ENCODE measurements at regions of chr21 and their contacts with region 1.

Region 1: DNA sequence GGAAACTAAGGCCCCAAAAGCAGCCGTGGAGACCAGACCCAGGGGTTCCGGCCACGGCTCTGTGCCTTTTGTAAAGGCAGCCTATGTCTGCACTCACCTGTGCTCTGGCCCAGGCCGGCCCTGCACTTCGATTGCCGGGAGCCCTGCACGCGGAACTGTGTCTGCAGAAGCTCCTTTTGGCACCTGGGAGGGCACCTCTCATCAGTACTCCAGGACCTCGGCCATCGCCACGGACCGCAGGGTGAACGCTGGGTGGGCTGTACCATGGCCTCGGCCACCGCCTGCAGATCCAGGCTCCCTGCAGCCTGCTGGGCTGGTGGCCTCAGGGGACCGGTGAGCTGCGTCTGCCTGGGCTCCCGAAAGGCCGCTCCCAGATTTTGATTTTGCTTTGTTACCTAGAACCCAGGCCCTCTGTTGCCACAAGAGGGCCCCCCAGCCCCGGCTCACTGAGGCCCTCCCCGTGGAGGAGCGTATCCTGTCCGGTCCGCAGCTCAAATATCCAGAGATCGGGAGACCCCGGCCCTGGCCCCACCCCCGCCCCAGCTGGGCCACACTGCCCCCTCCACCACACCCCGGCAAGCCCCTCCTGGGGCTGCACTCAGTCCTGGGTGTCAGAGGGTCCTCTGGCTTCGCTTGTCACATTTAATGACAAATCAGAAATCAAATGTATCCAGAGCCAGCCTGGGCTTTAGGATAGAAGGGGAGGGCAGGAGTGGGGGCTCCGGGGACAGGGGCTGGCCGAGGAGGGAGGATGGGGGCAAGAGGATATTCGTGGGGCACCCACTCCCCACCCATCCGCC is 60.2 kb upstream of the PDE9A start:
- DNase-seq: peak; percentile 58
- H3K4me3 ChIP-seq: peak overlapping the region; percentile 24
- H3K27ac ChIP-seq: no peak overlapping the region
- H3K4me1 ChIP-seq: peaks cover 8% of the 10 kb centered on the region
- H3K27me3 ChIP-seq: peaks cover 55% of the 10 kb centered on the region
- CTCF ChIP-seq: peak; percentile 87

Region 2: DNA sequence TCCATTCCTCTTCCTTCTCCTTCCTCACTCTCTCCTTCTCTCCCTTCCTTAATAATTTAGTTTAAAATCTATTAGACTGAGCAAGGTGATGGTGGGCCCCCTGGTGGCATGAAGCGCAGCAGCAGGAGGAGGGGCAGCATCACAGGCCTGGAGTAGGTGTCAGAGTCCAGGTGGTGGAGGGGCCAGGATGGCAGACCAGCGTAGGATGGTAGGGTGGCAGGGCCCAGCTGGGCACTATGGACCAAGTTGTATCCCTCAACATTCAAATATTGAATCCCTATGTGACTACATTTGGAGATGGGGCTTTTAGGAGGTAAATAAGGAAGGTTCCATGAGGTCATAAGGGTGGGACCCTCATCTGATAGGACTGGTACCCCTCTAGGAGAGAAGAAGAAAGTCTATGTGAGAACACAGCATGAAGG is 225.1 kb after region 1 on chr21:
- intact Hi-C with region 1: loop called (anchors 10 kb)
- DNase-seq: peak; percentile 63
- H3K4me3 ChIP-seq: no peak overlapping the region
- H3K27ac ChIP-seq: no peak overlapping the region
- H3K4me1 ChIP-seq: no peaks in the 10 kb centered on the region
- H3K27me3 ChIP-seq: peaks cover 37% of the 10 kb centered on the region
- CTCF ChIP-seq: peak; percentile 93